Activated T-helper 1 cell treated with anti-CD3 and anti-CD28 coated beads, Interleukin-12 subunit alpha, Interleukin-12 subunit beta, Interleukin-2, Interleukin-4 antibody, amounts not matched to agents 30 ng/mL and 10 ng/mL and 1 ng/mL, durations not matched to agents 14 hours and 24 hours and 36 hours (primary cell): ENCODE measurements at regions of chr21 and their contacts with region 1.

Region 1: DNA sequence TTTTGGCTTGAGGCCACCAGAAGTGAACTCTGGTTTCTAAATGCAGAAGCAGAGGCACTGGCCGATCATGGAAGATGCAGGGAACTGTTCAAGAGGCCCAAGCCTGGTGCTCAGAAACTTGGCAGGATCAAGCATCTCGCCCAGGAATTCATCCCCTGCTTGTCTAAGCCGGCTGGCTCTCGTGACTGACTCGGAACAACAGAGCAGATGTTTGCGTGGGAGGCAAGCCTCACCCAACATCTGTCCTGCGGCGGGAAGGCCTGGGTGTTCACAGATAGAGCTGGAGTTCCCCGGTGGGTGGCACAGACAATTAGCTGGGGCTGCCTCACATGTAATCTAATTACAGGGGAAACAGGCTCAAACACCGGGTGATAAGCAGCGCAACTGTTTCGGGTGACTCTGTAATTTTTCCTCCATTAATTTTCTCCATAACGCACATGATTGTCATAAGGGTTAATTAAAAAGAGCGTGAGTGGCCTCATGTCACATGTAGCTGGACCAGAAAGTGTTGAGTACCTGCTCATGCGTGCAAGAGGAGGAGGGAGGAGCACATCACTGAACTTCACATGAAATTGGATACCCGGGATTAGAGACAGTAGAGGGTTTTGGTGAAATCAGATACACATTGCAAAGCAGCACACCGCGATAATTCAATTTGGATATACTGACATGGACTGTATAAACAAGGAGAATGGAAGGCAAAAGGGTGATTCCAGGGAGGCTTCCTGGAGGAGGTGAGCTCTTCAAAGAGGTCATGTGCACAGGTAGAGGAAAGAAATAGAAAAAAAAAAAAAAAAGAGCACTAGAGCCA is 180.0 kb downstream of the ETS2 start:
- DNase-seq: peak; percentile 50
- H3K4me3 Mint-ChIP-seq: peak overlapping the region; percentile 80
- H3K27ac Mint-ChIP-seq: peak overlapping the region; percentile 93
- H3K4me1 Mint-ChIP-seq: peaks cover 36% of the 10 kb centered on the region
- H3K27me3 Mint-ChIP-seq: peaks cover 9% of the 10 kb centered on the region

Region 2: DNA sequence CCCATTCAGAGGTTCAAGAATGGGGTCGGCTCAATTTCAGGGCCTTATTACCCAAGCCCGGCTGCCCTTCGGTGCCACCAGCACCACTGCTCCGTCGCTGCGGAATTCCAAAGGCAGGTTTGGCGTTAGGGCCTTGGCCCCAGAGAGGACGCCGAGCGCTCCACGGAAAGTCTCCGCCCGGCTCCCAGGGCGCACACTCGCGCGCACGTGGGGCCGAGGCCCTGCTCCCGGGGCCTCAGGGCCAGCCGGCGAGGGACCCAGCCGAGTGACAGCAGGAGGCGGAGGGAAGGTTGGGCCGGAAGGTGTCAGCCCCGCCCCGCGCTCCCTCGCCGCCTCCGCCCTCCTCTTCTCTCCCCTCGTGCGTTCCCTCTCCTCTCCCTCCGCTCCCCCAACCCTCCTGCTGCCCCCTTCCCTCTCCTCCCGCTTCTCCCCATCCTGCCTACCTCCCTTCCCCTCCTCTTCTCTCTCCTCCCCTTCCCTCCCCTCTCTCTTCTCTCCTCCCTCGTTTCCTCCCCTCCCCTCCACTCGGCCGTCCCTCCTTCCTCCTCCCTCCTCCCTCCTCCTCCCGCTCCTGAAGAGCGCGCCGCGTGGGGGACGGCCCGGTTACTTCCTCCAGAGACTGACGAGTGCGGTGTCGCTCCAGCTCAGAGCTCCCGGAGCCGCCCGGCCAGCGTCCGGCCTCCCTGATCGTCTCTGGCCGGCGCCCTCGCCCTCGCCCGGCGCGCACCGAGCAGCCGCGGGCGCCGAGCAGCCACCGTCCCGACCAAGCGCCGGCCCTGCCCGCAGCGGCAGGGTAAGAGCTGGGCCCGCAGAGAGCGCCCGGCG is 180.2 kb before region 1 on chr21 and contains the start of gene ETS2:
- intact Hi-C with region 1: loop called (anchors 5 kb)
- DNase-seq: peak; percentile 72
- H3K4me3 Mint-ChIP-seq: peak within 1 kb of the TSS; percentile 92
- H3K27ac Mint-ChIP-seq: peak within 1 kb of the TSS; percentile 90
- H3K4me1 Mint-ChIP-seq: peaks cover 27% of the 10 kb centered on the region
- H3K27me3 Mint-ChIP-seq: peaks cover 7% of the 10 kb centered on the region
- total RNA-seq, gene ETS2: 22.9 and 25.8 TPM in 2 replicates

Region 3: DNA sequence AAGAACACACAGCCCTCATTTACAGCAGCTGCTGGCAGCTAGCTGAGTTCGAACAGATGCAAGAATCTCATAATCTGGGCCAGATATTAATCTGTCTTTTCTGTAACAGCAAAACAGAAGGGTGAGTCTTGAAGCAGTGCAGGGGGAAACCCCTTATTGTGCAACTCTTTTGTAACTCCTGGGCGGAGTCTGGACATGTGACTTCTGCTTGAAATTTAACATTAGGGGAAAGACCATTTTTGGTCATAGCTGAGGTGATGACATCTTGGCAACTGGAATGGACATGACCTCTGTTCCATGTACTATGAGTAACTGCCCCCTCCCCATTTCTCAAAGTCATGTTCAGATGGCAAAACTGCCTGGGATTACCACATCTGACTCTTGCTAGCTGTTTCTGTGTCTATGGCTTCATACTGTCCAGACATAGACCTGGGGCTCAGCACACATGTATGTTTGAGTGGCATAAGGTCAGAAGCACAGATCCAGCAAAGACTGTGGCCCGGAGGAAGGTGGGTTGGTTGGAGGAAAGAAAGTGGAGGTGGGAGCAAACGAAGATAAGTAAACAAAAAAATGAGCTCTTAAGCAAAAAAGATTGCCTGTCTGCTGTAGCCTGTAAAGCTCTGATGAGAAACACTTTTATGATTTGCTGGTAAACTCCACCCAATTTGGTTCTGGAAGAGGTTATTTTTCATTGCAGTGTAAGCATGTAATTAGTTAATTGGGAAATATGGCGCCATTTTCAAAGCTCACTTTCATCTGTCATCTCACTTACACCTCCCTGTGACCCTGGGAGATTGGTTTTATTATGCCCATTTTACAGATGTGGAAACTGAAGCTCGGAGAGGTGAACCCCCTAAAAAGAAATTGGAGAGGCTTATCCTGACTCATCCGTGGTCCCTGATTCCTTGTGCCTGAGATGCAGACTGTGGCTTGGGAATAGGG is 154.0 kb before region 1 on chr21:
- intact Hi-C with region 1: loop called (anchors 10 kb)
- DNase-seq: peak; percentile 48
- H3K4me3 Mint-ChIP-seq: no peak overlapping the region
- H3K27ac Mint-ChIP-seq: peak overlapping the region; percentile 27
- H3K4me1 Mint-ChIP-seq: peaks cover 16% of the 10 kb centered on the region
- H3K27me3 Mint-ChIP-seq: peaks cover 7% of the 10 kb centered on the region

Region 4: DNA sequence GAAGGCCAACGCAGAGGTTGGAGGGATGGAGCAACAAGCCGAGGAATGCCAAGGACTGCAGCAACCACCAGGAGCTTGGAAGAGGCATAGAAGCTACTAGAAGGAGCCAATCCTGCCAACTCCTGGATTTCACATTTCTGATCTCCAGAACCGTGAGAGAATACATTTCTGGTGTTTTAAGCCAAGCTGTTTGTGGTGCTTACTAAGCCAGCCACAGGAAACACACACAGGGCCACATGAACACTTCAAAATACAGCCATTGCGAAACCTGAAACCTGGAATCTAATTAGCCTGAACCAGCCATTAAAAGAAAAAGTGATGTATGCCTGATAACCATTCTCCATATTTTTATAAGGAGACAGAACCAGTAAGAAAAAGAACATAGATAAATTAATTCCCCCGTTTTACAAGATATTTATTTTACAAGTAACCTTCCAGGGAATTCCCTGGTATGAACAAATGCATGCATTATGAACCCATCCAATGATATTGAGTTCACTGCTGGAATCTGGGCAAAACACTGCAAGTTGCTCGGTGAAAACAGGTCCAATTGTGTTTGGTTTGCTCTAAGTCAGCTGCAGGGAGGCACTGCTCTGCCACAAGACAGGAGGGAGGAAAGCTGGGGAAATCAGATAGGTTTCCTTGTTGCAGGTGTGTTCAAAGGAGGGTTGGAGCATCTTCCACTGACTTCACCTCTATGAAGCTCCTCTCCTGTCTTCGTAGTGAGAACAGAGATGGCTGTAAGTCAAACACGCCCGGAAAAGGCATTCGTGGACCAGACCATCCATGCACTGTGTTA is 109.9 kb before region 1 on chr21:
- intact Hi-C with region 1: no loop called
- DNase-seq: no peak
- H3K4me3 Mint-ChIP-seq: no peak overlapping the region
- H3K27ac Mint-ChIP-seq: no peak overlapping the region
- H3K4me1 Mint-ChIP-seq: peaks cover 4% of the 10 kb centered on the region
- H3K27me3 Mint-ChIP-seq: peaks cover 4% of the 10 kb centered on the region

Region 5: GRCh38 chr21:38913120-38913892 is 72.5 kb before region 1 on chr21:
- intact Hi-C with region 1: loop called (anchors 2 kb)
- DNase-seq: no peak
- H3K4me3 Mint-ChIP-seq: no peak overlapping the region
- H3K27ac Mint-ChIP-seq: no peak overlapping the region
- H3K4me1 Mint-ChIP-seq: no peaks in the 10 kb centered on the region
- H3K27me3 Mint-ChIP-seq: peaks cover 4% of the 10 kb centered on the region

Region 6: GRCh38 chr21:38937844-38938742 is 47.7 kb before region 1 on chr21:
- intact Hi-C with region 1: loop called (anchors 1 kb)
- DNase-seq: peak; percentile 41
- H3K4me3 Mint-ChIP-seq: no peak overlapping the region
- H3K27ac Mint-ChIP-seq: peak overlapping the region; percentile 59
- H3K4me1 Mint-ChIP-seq: peaks cover 15% of the 10 kb centered on the region
- H3K27me3 Mint-ChIP-seq: no peaks in the 10 kb centered on the region

Region 7: DNA sequence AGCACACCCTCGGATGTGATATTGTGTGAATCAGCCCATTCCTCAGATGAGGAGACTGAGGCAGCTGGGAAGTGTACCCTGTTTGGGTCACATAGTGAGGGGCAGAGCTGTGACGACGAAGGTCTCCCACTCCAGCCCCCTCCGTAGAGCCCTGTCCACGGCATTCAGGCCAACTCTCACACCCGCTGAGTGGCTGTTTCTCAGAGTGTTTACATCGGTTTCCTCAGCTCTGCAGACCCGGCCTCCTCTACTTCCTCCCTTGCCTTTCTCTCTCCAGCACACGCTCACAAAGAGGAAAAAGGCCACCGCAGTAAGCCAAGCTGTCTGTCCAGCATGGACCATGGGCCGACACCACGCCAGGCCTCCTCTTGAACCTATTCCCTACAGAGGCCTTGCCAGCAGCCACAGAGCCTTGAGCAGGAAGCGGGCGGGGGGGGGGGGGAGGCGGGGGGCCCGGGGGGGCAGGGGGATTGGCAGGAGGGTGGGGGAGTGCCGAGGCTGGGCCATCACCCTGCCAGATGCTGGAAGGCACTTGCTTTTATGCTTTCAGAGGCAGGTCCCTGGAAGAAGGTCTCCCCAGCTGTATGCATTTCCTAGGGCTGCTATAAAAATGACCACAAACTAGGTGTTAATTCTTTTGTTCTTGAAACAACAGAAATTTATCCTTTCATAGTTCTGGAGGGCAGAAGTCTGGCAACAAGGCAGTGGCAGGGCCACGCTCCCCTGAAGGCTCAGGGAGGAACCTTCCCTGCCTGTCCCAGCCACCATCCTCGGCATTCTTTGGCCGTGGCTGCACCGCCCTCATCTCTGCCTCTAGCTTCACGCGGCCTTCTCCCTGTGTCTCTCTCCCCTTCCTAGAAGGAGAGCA is 19.1 kb after region 1 on chr21:
- intact Hi-C with region 1: loop called (anchors 2 kb)
- DNase-seq: no peak
- H3K4me3 Mint-ChIP-seq: no peak overlapping the region
- H3K27ac Mint-ChIP-seq: peak overlapping the region; percentile 83
- H3K4me1 Mint-ChIP-seq: peaks cover 42% of the 10 kb centered on the region
- H3K27me3 Mint-ChIP-seq: no peaks in the 10 kb centered on the region

Region 8: DNA sequence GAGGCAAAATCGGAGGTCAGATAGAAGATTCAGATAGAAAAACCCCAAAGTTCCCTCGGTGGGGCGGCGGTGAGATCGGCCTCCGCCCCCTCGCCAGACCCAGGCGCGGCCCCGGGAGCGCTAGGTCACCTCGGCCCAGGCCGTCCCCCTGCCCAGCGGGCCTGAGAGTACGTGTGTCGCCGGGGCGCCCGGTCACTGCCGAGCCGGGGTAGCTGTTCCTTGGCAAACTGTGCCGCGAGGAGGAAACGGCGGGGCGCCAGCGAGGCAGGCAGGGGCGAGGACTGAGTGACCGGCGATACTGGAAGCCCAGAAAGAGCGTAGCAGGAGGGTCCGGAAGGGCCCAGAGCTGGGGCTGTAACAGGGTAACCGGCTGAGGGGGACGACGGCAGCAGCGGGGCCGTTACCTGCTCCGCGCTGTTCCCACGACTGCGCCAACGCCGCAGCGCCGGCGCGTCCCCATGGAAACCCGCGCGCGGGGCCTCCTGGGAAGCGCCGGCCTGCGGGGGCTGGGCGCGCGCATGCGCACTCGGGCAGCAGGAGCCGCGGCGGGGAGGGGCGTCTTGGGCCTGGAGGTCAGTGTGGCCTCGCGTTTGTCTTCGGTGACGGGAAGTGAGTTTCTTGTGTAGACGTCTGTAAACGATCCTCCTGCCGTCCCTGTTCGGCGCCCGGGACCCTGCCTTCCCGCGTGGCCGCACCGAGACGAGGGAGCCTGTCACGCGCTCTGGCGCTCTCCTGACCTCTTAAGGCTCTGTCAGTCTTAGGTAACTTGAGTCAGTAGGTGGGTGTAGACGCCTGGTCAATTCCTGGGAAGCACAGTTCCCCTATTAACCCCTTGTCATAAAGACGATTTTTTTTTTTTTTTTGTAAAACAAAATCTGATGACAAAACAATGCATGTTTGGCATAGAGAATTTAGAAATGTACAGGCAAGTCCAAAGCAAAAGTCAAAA is 459.8 kb after region 1 on chr21 and contains the start of gene LCA5L:
- intact Hi-C with region 1: loop called (anchors 1 kb)
- DNase-seq: peak; percentile 90
- H3K4me3 Mint-ChIP-seq: peak within 1 kb of the TSS; percentile 93
- H3K27ac Mint-ChIP-seq: peak within 1 kb of the TSS; percentile 95
- H3K4me1 Mint-ChIP-seq: peaks cover 14% of the 10 kb centered on the region
- H3K27me3 Mint-ChIP-seq: peaks cover 33% of the 10 kb centered on the region
- total RNA-seq, gene LCA5L: not detected in 2 replicates